SK-N-SH (cell line): ENCODE measurements at regions of chr14 and their contacts with region 1.

Region 1: GRCh38 chr14:100108042-100108825 is 43.0 kb downstream of the EVL start:
- DNase-seq: peak; percentile 92
- H3K4me3 ChIP-seq: no peak overlapping the region
- H3K27ac ChIP-seq: peak overlapping the region in 1 of 2 experiments; percentile 43; a peak in 1 of 4 replicates
- H3K4me1 ChIP-seq: peaks cover 15 to 22% of the 10 kb centered on the region in 2 experiments; a peak in 3 of 4 replicates
- H3K27me3 ChIP-seq: no peaks in the 10 kb centered on the region
- CTCF ChIP-seq: peak; percentile 84
- EP300 ChIP-seq: peak in 1 of 2 experiments; percentile 62; a peak in 1 of 4 replicates
- RAD21 ChIP-seq: peak; percentile 78

Region 2: DNA sequence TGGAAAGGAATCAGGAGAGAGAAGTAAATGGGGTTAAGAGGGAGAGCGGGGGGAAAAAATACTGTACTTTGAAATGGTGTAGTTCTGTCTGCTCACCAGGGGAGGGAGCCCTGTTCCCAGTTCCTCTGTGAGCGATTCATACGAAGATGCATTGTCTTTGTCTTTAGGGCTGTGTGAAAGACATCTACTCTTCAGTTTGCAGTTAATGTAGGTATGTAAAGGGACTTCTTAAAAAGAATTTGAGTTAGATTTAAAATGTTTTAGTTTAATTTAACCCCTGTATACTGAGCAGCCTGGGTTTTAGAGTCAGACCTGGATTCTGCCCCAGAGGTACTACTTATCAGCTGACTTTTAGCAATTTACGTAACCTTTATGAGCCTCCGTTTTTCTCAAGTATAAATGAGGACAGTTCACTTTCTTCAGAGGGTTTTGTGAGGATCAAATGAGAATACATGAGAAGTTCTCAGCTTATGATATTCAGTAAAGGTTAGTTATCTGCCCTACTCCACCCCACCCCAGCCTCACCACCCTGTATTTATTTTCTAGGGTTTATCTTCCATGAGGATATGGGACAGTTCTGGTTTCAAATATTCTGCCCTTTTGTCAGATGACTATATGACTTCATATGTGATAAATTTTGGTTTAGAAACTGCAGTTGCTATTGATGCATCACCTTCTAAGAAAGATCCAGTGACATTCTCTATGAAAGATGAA is 125.5 kb before region 1 on chr14:
- CTCF ChIA-PET with region 1: interaction called, 68 read pairs
- POLR2A ChIA-PET with region 1: no interaction called
- DNase-seq: peak; percentile 81
- H3K4me3 ChIP-seq: no peak overlapping the region; a peak in 1 of 4 replicates
- H3K27ac ChIP-seq: no peak overlapping the region
- H3K4me1 ChIP-seq: peaks cover 6 to 7% of the 10 kb centered on the region in 2 experiments; a peak in 1 of 4 replicates
- H3K27me3 ChIP-seq: no peaks in the 10 kb centered on the region
- CTCF ChIP-seq: peak; percentile 92
- EP300 ChIP-seq: no peak
- RAD21 ChIP-seq: peak; percentile 98

Region 3: GRCh38 chr14:100076133-100076532 is 32.1 kb before region 1 on chr14:
- CTCF ChIA-PET with region 1: interaction called, 15 read pairs
- POLR2A ChIA-PET with region 1: no interaction called
- DNase-seq: no peak
- H3K4me3 ChIP-seq: no peak overlapping the region
- H3K27ac ChIP-seq: no peak overlapping the region
- H3K4me1 ChIP-seq: peaks cover 17 to 33% of the 10 kb centered on the region in 2 experiments
- H3K27me3 ChIP-seq: no peaks in the 10 kb centered on the region
- CTCF ChIP-seq: peak; percentile 38
- EP300 ChIP-seq: no peak
- RAD21 ChIP-seq: no peak

Region 4: DNA sequence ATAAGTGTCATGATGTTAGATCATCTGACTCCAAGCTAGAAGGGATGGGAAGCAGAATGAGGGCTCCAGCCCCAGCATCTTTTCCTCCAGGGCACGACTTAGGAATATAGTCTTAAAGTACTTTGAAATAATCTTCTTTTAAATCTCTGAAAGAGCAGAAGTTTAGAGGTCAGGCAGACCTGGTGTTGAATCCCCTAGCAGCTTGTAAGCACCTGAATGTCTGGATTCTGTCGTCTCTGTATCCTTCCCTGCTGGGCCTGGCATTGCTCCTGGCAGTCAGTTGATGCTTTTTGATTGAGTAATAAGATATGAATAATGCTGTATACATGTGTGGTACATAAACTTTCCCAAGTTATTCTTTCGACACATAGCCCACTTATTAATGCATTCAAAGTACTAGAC is 11.7 kb before region 1 on chr14:
- CTCF ChIA-PET with region 1: interaction called, 40 read pairs
- POLR2A ChIA-PET with region 1: no interaction called
- DNase-seq: no peak
- H3K4me3 ChIP-seq: no peak overlapping the region
- H3K27ac ChIP-seq: peak overlapping the region in 1 of 2 experiments; percentile 5; a peak in 1 of 4 replicates
- H3K4me1 ChIP-seq: peaks cover 0 to 20% of the 10 kb centered on the region in 2 experiments; a peak in 1 of 4 replicates
- H3K27me3 ChIP-seq: no peaks in the 10 kb centered on the region
- CTCF ChIP-seq: no peak
- EP300 ChIP-seq: peak in 1 of 2 experiments; percentile 40; a peak in 1 of 4 replicates
- RAD21 ChIP-seq: no peak

Region 5: DNA sequence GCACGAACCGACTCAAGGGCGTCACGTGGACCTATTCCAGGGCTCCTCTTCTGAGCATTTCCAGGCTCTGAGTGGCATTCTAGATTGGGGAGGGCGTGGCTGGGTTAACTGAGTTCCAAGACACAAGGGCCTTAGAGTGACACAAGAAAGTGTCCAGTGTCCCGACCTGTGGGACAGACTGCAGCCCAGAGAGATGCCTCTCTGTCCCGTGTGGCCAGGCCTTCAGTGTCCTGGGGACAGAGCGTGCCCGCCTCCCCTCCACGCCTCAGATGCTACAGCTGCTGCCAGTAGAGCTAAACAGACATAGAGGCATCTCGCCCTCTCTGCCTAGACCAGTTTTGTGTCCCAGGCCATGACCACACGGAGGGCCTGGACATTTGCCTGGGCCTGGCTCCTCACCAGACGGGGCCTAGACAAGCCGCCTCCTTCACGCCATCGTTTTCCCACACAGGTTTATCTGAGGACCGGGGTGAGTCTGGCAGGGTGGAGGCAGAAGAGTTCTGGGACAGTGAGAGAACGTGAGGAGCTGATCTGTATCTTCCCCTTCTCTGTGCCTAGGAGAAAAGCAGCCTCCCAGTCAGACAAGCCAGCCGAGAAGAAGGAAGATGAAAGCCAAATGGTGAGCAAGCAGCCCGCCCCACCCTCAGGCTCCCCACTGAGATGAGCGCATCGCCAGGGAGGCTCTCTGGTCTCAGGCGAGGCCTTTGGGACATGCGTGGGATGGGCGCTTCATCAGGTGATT is 24.1 kb after region 1 on chr14:
- CTCF ChIA-PET with region 1: interaction called, 70 read pairs
- POLR2A ChIA-PET with region 1: no interaction called
- DNase-seq: peak; percentile 58
- H3K4me3 ChIP-seq: no peak overlapping the region
- H3K27ac ChIP-seq: peak overlapping the region; percentile 28 to 74; a peak in 3 of 4 replicates
- H3K4me1 ChIP-seq: peaks cover 9 to 74% of the 10 kb centered on the region in 2 experiments; a peak in 3 of 4 replicates
- H3K27me3 ChIP-seq: no peaks in the 10 kb centered on the region
- CTCF ChIP-seq: no peak
- EP300 ChIP-seq: no peak
- RAD21 ChIP-seq: no peak

Region 6: DNA sequence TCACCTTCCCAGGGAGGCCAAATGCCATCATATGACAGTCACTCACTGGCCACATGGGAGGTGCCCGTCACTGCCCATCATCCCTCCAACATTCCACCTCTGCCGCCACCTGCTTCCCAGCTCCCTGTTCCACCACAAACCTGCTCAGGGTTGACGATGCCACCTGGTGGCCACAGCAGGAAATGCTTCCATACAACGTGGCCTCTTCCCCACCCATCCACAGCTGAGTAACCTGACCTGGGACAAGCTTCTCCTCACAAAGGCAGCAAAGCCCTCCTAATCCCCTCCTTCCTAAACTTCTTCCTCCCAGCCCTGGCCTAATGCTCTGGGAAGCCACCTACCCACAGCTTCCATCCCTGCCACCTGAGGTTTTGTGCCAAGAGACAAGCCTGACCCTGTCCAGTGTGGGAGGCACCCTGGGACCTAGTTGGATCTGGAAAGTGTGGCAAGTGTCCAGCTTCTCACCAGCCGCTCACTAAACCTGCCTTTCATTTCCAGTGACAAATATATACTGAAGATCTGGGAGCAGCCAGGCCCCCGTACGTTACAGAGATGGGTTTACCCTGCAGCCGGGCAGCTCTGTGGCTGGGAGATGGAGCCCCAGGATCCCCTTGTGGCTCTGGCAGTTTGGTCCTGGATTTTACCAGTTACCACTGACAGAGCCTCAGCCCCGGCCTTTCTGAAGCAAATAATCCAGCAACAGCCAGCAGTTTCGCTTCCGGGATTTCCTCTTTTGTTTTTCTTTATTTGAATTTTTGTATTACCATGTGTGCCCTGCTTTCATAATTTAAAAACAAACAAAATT is 47.0 kb after region 1 on chr14:
- CTCF ChIA-PET with region 1: interaction called, 19 read pairs
- POLR2A ChIA-PET with region 1: interaction called, 4 read pairs
- DNase-seq: peak; percentile 64
- H3K4me3 ChIP-seq: no peak overlapping the region; a peak in 1 of 4 replicates
- H3K27ac ChIP-seq: peak overlapping the region in 1 of 2 experiments; percentile 14; a peak in 1 of 4 replicates
- H3K4me1 ChIP-seq: peaks cover 0 to 28% of the 10 kb centered on the region in 2 experiments; a peak in 2 of 4 replicates
- H3K27me3 ChIP-seq: peaks cover 6% of the 10 kb centered on the region
- CTCF ChIP-seq: peak; percentile 58
- EP300 ChIP-seq: no peak
- RAD21 ChIP-seq: no peak